ENCODE measurements at regions of chr3 and their contacts with region 1.

Region 1: GRCh38 chr3:98540346-98540745 is 8.6 kb downstream of the GPR15 start:
- DNase-seq: peak; percentile 85
- H3K4me3 ChIP-seq: peak overlapping the region; percentile 43
- H3K27ac ChIP-seq: peak overlapping the region; percentile 83
- H3K4me1 ChIP-seq: peaks cover 62% of the 10 kb centered on the region
- CTCF ChIP-seq: no peak

Region 2: GRCh38 chr3:98048586-98048985 is 491.8 kb before region 1 on chr3:
- CTCF ChIA-PET with region 1: no interaction called
- POLR2A ChIA-PET with region 1: no interaction called
- intact Hi-C with region 1: no loop called
- DNase-seq: no peak
- H3K4me3 ChIP-seq: no peak overlapping the region
- H3K27ac ChIP-seq: no peak overlapping the region
- H3K4me1 ChIP-seq: no peaks in the 10 kb centered on the region
- CTCF ChIP-seq: no peak

Region 3: DNA sequence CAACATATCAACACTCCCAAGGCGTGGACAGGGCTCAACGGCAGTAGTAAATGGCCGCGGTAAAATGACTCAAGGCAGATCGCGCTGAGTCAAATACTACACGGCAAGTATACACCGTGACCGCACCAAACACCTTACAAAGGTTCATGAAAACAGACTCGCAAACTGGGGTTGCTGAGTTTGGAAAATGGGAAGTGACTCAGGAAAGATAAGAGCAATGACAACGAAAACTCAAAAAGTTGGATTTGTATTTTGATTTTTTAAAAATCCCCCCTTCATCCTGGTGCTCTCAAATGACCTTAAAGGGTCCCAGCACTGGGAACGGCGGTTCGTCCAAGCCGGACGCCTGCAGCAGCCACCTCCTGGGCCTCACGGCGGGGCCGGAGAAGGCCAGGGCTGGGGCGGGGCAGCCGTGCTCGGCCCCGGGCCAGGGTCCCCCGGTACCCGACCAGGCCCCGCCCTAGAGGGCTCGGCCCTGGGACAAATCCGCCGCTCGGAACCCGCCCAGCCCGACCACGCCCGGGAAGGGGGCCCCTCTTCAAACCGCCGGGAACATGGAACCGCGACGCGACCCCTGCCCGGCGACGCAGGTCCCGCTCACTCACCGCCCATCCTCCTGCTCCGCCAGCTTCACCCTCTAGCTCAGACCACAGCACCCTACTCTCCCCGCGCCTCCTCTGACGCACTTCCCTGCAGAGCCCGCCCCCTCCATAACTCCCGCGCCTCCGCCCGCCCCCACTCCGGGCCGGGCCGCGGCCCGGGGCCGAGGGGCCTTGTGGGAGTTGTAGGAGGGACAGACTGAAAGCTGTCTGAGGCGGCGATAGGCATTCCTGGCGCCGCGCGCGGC is 17.9 kb before region 1 on chr3 and contains the start of gene CLDND1:
- CTCF ChIA-PET with region 1: no interaction called
- POLR2A ChIA-PET with region 1: interaction called, 16 read pairs
- intact Hi-C with region 1: no loop called
- DNase-seq: peak; percentile 96
- H3K4me3 ChIP-seq: peak within 1 kb of the TSS; percentile 83
- H3K27ac ChIP-seq: peak within 1 kb of the TSS; percentile 17
- H3K4me1 ChIP-seq: peaks cover 29% of the 10 kb centered on the region
- CTCF ChIP-seq: no peak
- total RNA-seq, gene CLDND1: 70.7 and 78.0 TPM in 2 replicates

Region 4: DNA sequence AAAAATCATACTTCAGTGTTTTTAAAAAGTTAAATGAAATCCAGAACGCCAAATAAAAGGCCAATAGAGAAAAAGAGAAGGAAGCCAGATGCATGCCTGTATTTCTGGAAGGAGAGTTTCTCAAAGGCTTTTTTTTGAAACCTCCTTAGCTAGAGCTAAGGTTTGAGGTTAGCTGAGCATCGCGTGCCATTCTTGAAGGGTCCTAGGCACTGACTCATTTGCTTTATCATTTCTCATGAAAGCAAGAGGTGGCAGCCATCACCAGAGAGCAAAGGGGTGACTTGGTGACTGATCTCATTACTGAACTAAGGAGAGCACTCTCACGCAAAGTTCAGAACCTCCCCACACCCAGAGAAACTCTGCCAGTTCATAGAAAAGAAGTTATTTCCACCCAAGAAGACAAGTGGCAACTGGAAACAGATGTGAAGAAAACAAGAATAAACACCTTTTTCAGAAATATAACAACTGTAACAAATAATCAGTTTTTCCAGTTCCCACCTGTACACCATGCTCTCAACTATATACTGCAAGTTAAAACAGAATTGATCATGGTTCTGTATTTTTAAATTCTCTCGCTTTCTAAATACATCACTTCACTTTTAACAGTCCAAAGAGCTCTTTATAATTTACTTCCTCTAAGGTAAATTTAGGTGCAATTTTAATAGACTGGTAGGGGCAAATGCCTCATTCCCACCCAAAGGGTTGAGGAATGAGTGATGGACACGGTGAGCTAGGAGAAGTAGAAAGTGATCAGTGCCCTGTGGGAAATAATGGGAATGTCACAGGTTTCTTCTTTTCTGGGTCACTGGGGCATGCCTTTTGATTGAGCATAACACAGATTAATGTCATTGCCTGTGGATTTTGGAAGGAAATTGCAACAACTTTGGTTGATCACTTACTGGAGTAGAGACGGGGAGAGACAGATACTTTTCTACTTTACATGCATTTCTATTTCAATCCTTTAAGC is 16.1 kb after region 1 on chr3:
- CTCF ChIA-PET with region 1: no interaction called
- POLR2A ChIA-PET with region 1: interaction called, 296 read pairs
- intact Hi-C with region 1: no loop called
- DNase-seq: peak; percentile 22
- H3K4me3 ChIP-seq: peak overlapping the region; percentile 21
- H3K27ac ChIP-seq: peak overlapping the region; percentile 35
- H3K4me1 ChIP-seq: peaks cover 78% of the 10 kb centered on the region
- CTCF ChIP-seq: no peak

Measured in OCI-LY7 (cell line).